IMR-90 (cell line): ENCODE measurements at regions of chr10 and their contacts with region 1.

Region 1: GRCh38 chr10:32378363-32379317 is 31.7 kb upstream of the EPC1 start:
- DNase-seq: peak; percentile 85
- ATAC-seq: peak; percentile 97
- H3K4me3 ChIP-seq: peak overlapping the region; percentile 62
- H3K27ac ChIP-seq: peak overlapping the region; percentile 86
- H3K4me1 ChIP-seq: 0 out of 2 replicates have a peak, but pooled peaks cover 1% of the 10 kb centered on the region
- H3K27me3 ChIP-seq: no peaks in the 10 kb centered on the region
- CTCF ChIP-seq: no peak
- POLR2A ChIP-seq: peak; percentile 58; the same call in 1 of the 2 replicates
- RAD21 ChIP-seq: no peak

Region 2: DNA sequence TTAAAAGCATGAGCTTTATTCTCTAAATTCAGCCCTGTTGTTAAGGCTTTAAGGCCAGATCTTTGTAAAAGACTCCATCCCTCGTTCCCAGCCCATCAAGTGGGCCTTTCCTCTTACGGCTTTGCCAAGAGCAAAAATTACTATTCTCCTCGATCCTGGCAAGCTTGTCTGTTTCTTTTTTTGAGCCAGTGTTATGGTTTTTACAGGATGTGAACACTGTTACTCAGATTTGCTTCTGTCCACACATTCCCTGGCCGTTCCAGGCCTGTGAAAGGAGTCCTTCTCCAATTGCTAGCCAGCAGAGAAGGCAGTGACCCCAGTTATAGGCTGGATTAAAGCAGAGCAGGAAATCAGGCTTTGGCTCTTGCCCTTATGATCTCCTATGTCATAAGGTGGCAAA is 15.3 kb after region 1 on chr10:
- CTCF ChIA-PET with region 1: no interaction called
- POLR2A ChIA-PET with region 1: no interaction called
- dilution Hi-C with region 1: no loop called
- in situ Hi-C with region 1: no loop called
- intact Hi-C with region 1: no loop called
- DNase-seq: no peak
- ATAC-seq: 0 out of 2 replicates have a peak, but pooled peaks have one; percentile 29
- H3K4me3 ChIP-seq: no peak overlapping the region
- H3K27ac ChIP-seq: no peak overlapping the region
- H3K4me1 ChIP-seq: no peaks in the 10 kb centered on the region
- H3K27me3 ChIP-seq: no peaks in the 10 kb centered on the region
- CTCF ChIP-seq: no peak
- POLR2A ChIP-seq: no peak
- RAD21 ChIP-seq: no peak

Region 3: DNA sequence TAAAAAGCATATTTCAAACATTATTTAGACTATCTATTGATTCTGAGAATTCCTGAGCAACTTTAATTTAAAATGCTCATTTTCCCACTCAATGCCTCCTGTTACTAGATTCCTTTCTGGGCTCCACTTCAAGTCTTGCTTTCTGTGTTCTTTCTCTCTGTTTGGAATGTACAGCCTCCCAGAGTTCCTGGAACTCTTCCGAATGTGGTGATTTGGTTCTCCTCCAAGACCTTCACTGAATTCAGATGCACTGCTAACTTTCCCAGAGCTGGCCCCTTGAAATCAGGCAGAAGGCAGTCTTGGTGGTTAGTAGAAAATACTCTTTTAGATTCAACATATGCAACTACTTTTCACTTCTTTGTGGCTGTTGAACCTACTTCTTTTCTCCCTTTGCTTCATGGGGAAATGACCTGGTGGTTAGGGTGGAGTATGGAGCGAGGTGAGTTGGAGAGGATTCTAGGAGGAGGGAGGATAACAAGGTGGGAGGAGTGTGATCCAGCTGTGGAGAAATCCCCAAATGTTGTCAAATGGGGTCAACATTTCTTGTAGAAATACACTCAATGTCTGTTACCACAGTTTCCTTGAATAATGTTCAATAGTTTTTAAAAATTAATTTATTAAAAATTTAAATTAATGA is 39.4 kb after region 1 on chr10:
- CTCF ChIA-PET with region 1: no interaction called
- POLR2A ChIA-PET with region 1: no interaction called
- dilution Hi-C with region 1: no loop called
- in situ Hi-C with region 1: no loop called
- intact Hi-C with region 1: loop called (anchors 2 kb)
- DNase-seq: peak; percentile 89
- ATAC-seq: peak; percentile 75
- H3K4me3 ChIP-seq: no peak overlapping the region
- H3K27ac ChIP-seq: peak overlapping the region; percentile 91; the same call in 1 of the 2 replicates
- H3K4me1 ChIP-seq: peaks cover 7% of the 10 kb centered on the region
- H3K27me3 ChIP-seq: no peaks in the 10 kb centered on the region
- CTCF ChIP-seq: no peak
- POLR2A ChIP-seq: no peak
- RAD21 ChIP-seq: no peak